ENCODE measurements at regions of chr2 and their contacts with region 1.

Region 1: DNA sequence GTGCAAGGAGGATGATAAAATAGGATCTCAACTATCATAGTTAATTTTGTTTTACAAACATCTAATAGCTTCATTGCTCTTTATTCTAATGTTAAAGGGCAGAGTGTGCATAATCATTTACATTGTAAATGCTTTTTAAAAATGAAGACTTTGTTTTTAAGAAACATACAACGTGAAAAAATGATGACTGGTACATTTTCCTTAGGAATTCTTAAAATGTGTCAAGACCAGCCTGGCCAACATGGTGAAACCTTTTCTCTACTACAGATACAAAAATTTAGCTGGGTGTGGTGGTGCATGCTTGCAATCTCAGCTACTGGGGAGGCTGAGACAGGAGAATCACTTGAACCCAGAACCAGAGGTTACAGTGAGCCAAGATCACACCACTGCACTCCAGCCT is 179.0 kb downstream of the PDE1A start:
- DNase-seq: no peak
- ATAC-seq: no peak

Region 2: DNA sequence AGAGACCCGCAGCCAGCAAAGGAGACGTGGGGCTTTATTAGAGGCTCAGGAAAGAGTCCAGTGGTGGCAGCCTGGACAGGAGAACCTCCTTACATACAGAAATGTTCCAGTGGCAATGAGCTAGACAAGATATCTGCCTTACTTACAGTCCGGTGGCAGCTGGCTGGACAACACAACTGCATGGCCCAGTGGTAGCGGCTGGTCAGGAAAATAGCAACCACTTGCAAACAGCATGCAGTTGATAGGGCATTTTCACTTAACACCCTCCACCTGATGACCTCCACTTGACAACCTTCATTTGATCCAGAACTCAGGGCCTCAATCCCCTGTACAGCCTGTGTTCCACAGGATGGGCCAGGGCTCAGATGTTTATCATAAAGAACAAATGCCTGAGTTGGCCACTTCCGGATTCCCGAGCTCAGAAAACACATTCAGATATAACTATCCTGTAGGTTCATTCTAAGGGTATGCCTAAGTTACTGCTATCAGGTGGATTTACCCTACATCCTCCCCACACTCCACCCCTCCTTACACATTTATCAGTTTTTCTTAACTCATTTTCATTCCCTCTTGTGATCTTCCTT is 419.6 kb before region 1 on chr2:
- intact Hi-C with region 1: no loop called
- DNase-seq: no peak
- ATAC-seq: no peak

Region 3: GRCh38 chr2:182298456-182298855 is 50.6 kb after region 1 on chr2:
- intact Hi-C with region 1: loop called (anchors 1 kb)
- DNase-seq: no peak
- ATAC-seq: no peak

Measured in sciatic nerve (tissue), 2 donors.